ENCODE measurements at regions of chr4 and their contacts with region 1.

Region 1: GRCh38 chr4:26330186-26330787 is 9.5 kb downstream of the RBPJ start:
- DNase-seq: peak; percentile 74
- H3K4me3 ChIP-seq: no peak overlapping the region
- H3K27ac ChIP-seq: no peak overlapping the region
- H3K4me1 ChIP-seq: no peaks in the 10 kb centered on the region
- H3K27me3 ChIP-seq: no peaks in the 10 kb centered on the region
- CTCF ChIP-seq: peak; percentile 21 to 56
- POLR2A ChIP-seq: no peak

Region 2: GRCh38 chr4:26319467-26319948 is 10.8 kb before region 1 on chr4:
- CTCF ChIA-PET with region 1: interaction called, 11 read pairs
- POLR2A ChIA-PET with region 1: interaction called, 3 read pairs
- dilution Hi-C with region 1: no loop called
- intact Hi-C with region 1: no loop called
- DNase-seq: peak; percentile 100
- H3K4me3 ChIP-seq: peak overlapping the region; percentile 76 to 84 (median 79)
- H3K27ac ChIP-seq: peak overlapping the region; percentile 80
- H3K4me1 ChIP-seq: peaks cover 23% of the 10 kb centered on the region
- H3K27me3 ChIP-seq: no peaks in the 10 kb centered on the region
- CTCF ChIP-seq: no peak
- POLR2A ChIP-seq: no peak

Region 3: DNA sequence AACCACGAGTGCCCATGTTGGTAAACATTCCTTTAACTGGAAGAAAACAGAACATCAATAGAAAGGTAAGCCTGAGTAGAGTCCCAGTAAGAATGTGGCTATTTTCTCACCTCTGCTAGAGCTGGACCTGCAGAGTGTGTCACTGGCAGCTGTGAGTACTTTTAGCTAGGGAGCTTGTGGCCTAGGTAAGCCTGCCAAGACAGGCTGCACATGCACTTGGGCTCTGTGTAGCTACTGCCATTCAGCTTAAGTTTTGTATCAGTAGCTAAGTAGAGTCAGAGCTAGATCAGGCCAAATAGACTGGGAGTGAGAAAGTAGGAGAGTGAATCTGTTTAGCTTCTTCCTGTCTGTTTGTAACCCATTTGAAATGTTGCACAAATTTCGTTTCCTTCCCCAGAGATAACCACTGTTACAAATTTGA is 25.8 kb after region 1 on chr4:
- CTCF ChIA-PET with region 1: interaction called, 22 read pairs
- POLR2A ChIA-PET with region 1: no interaction called
- dilution Hi-C with region 1: no loop called
- intact Hi-C with region 1: no loop called
- DNase-seq: no peak
- H3K4me3 ChIP-seq: no peak overlapping the region
- H3K27ac ChIP-seq: no peak overlapping the region
- H3K4me1 ChIP-seq: no peaks in the 10 kb centered on the region
- H3K27me3 ChIP-seq: no peaks in the 10 kb centered on the region
- CTCF ChIP-seq: no peak
- POLR2A ChIP-seq: no peak

Region 4: GRCh38 chr4:26380740-26381139 is 50.5 kb after region 1 on chr4:
- CTCF ChIA-PET with region 1: interaction called, 14 read pairs
- POLR2A ChIA-PET with region 1: no interaction called
- dilution Hi-C with region 1: no loop called
- intact Hi-C with region 1: no loop called
- DNase-seq: no peak
- H3K4me3 ChIP-seq: no peak overlapping the region
- H3K27ac ChIP-seq: no peak overlapping the region
- H3K4me1 ChIP-seq: no peaks in the 10 kb centered on the region
- H3K27me3 ChIP-seq: no peaks in the 10 kb centered on the region
- CTCF ChIP-seq: no peak
- POLR2A ChIP-seq: no peak

Region 5: DNA sequence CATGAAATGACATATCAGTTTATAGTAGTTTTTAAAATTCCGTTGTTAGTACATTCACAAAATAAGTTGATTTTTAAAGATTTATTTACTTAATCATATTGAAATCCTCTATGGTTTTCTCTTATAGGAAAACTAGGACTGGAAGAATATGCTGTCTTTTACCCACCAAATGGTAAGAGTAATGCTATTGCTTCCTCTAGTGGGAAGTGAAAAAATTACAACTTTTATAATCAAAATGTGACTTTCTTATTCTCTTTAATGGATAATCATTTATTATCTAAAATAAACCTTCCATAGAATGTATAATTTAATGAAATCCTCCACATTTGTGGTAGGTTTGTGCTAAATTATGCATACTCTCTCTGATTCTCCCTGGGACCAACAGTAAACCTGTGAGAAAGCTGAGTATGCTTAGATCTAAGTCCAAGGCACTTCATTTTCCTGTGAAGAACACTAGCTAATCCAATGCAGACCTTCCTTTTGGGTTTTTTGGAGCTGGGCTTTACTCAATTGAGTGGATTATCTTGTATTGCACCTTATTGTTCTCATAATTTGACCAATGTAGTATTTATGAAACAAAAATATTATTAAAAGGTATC is 389.8 kb after region 1 on chr4:
- CTCF ChIA-PET with region 1: interaction called, 10 read pairs
- POLR2A ChIA-PET with region 1: no interaction called
- dilution Hi-C with region 1: no loop called
- intact Hi-C with region 1: loop called (anchors 2 kb)
- DNase-seq: peak; percentile 45
- H3K4me3 ChIP-seq: no peak overlapping the region
- H3K27ac ChIP-seq: no peak overlapping the region
- H3K4me1 ChIP-seq: no peaks in the 10 kb centered on the region
- H3K27me3 ChIP-seq: no peaks in the 10 kb centered on the region
- CTCF ChIP-seq: peak in 1 of 2 donors; percentile 34
- POLR2A ChIP-seq: no peak

Measured in endothelial cell of umbilical vein (primary cell).